ENCODE measurements at regions of chr15 and their contacts with region 1.

Region 1: DNA sequence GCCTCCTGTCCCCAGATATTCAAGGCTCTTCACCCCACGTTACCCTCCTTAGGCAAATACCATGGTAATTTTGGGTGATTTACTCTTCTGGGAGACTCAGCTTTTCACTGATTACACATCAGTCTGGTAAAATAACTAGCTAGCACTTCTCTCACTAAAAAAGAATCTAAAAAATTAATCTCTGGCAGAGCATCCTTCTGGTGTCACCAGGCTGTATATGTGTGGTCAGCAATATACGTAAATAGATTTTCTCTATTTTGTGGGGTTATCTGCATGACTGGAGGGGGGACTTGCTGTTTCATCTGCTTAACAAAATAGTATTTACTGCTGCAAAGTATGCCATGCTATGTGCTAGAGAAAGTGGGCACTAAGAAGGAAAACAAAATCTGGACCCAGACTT is 45.1 kb downstream of the LRRC28 start:
- DNase-seq: no peak
- H3K4me3 ChIP-seq: no peak overlapping the region
- H3K27ac ChIP-seq: no peak overlapping the region
- H3K4me1 ChIP-seq: no peaks in the 10 kb centered on the region
- H3K27me3 ChIP-seq: no peaks in the 10 kb centered on the region
- CTCF ChIP-seq: no peak
- POLR2A ChIP-seq: no peak

Region 2: GRCh38 chr15:97791824-97792792 is 1504.3 kb before region 1 on chr15:
- intact Hi-C with region 1: no loop called
- DNase-seq: no peak
- H3K4me3 ChIP-seq: no peak overlapping the region
- H3K27ac ChIP-seq: no peak overlapping the region
- H3K4me1 ChIP-seq: no peaks in the 10 kb centered on the region
- H3K27me3 ChIP-seq: peaks cover 0 to 6% of the 10 kb centered on the region in 2 donors
- CTCF ChIP-seq: no peak
- POLR2A ChIP-seq: no peak

Region 3: DNA sequence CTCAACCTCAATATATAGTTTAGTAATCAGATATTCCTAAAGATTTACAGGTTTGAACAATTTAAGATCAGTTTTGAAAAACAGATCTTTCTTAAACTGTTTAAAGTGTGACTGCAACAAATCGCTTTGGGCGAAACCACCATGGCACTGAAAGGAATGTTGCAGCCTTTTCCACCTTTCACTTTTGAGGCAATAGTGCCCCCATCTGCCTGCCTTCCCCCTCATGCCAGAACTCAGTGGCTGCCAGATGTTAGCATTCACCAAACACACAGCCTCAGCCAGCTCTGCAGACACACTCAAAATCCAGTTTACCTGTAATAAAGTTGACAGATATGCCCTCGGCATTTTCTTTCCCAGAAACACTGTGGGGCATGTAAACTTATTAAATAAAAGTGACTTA is 433.5 kb after region 1 on chr15:
- intact Hi-C with region 1: loop called (anchors 10 kb)
- DNase-seq: peak in 1 of 2 donors; percentile 59
- H3K4me3 ChIP-seq: no peak overlapping the region
- H3K27ac ChIP-seq: no peak overlapping the region
- H3K4me1 ChIP-seq: peaks cover 0 to 5% of the 10 kb centered on the region in 2 donors
- H3K27me3 ChIP-seq: no peaks in the 10 kb centered on the region
- CTCF ChIP-seq: peak in 1 of 3 donors; percentile 13
- POLR2A ChIP-seq: no peak

Measured in breast epithelium (tissue), 4 donors.